Activated CD8-positive, alpha-beta memory T cell treated with anti-CD3 and anti-CD28 coated beads, Interleukin-2, amount 10 ng/mL, durations not matched to agents 7 days and 5 days (primary cell): ENCODE measurements at regions of chr2 and their contacts with region 1.

Region 1: DNA sequence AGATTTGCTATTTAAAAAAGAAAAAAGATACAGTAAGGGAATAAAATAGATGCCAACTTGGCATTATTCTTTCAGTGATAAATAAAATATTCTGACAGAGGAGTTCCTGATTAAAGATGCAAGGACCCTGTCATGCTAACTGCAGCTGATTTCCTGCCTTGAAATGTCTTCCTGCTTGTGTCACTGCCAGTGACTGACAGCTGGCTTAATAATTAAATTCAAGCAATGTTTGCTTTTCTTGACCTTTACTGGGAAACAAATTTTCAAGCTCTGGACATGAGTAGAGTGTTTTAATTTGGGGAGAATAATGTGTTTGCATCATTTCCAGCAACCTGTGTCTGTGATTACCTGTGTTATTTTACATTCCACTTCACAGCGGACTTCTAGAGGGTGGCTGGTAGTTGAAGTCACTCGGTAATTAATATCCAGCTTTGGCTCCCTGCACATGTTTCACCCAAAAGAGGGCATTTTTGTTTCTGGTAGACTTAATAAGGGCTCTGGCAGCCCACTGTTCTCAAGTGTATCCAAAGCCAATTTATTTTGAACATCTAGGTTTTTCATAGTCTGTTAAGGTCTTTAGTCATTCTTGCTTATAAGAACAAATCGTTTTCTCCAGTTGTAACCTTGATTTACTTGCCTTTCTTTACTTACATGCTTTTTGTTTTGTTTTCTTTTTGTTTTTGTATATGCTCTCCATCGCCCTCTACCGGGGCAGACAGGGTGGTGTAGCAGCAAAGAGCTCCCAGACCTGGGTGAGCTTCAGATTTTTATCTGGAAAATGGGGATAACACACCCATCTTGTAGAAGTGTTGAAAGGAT is 48.5 kb upstream of the PROKR1 start:
- DNase-seq: peak; percentile 69
- ATAC-seq: peak; percentile 77
- H3K4me3 Mint-ChIP-seq: peak overlapping the region; percentile 27
- H3K27ac Mint-ChIP-seq: peak overlapping the region; percentile 50
- H3K4me1 Mint-ChIP-seq: peaks cover 11% of the 10 kb centered on the region
- H3K27me3 Mint-ChIP-seq: peaks cover 13% of the 10 kb centered on the region

Region 2: DNA sequence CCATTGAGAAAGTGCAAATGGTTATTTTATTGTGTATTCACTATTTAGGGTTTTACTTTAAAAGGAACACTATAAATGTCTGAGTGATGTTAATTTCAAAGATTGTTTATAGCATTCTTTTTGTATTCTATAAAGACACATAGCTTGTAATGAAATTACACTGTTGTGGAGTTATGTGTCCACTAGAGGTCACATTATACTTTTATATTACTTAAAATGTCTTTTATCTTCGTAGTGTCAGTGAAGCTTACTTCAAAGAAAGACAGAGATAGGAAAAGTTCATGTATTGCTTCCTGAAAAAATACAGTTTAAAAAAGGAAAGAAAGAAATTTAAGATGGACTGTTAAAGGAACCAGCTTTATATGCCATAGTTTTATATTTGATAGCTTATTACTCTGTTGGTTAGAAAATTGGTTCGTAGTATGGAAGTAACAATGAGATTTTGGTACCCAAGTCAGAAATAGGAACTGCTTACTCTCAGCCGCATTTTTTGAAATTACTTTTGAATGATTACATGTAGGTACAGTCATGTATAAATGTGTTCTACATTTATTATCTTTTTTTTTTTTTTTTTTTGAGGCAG is 107.0 kb before region 1 on chr2:
- CTCF ChIA-PET with region 1: interaction called, 19 read pairs
- DNase-seq: no peak
- ATAC-seq: no peak
- H3K4me3 Mint-ChIP-seq: no peak overlapping the region
- H3K27ac Mint-ChIP-seq: no peak overlapping the region
- H3K4me1 Mint-ChIP-seq: peaks cover 3% of the 10 kb centered on the region
- H3K27me3 Mint-ChIP-seq: no peaks in the 10 kb centered on the region

Region 3: DNA sequence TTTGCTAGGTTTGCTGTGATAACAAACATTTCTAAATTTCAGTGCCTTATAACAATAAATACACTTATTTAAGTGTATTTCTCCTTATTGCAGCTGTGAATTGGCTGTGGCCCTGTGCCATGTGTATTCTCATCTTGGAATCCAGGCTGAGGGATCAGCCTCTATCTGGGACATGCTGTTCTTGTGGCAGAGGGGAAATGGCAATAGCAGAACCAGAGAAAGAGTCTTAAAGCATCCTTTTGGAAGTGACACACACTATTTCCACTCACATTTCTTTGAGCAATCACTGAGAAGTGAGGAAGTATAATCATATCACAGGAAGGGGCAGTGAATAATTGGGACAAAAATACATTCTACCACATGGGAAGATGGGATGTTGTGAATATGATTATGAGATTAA is 17.7 kb before region 1 on chr2:
- CTCF ChIA-PET with region 1: interaction called, 19 read pairs
- DNase-seq: no peak
- ATAC-seq: no peak
- H3K4me3 Mint-ChIP-seq: no peak overlapping the region
- H3K27ac Mint-ChIP-seq: no peak overlapping the region
- H3K4me1 Mint-ChIP-seq: no peaks in the 10 kb centered on the region
- H3K27me3 Mint-ChIP-seq: no peaks in the 10 kb centered on the region

Region 4: GRCh38 chr2:68605939-68606338 is 11.1 kb after region 1 on chr2:
- CTCF ChIA-PET with region 1: interaction called, 18 read pairs
- DNase-seq: no peak
- ATAC-seq: no peak
- H3K4me3 Mint-ChIP-seq: no peak overlapping the region
- H3K27ac Mint-ChIP-seq: no peak overlapping the region
- H3K4me1 Mint-ChIP-seq: peaks cover 11% of the 10 kb centered on the region
- H3K27me3 Mint-ChIP-seq: no peaks in the 10 kb centered on the region

Region 5: GRCh38 chr2:68689553-68690537 is 95.0 kb after region 1 on chr2:
- CTCF ChIA-PET with region 1: no interaction called
- DNase-seq: no peak
- ATAC-seq: peak; percentile 57
- H3K4me3 Mint-ChIP-seq: no peak overlapping the region
- H3K27ac Mint-ChIP-seq: peak overlapping the region; percentile 44
- H3K4me1 Mint-ChIP-seq: peaks cover 20% of the 10 kb centered on the region
- H3K27me3 Mint-ChIP-seq: peaks cover 16% of the 10 kb centered on the region

Region 6: DNA sequence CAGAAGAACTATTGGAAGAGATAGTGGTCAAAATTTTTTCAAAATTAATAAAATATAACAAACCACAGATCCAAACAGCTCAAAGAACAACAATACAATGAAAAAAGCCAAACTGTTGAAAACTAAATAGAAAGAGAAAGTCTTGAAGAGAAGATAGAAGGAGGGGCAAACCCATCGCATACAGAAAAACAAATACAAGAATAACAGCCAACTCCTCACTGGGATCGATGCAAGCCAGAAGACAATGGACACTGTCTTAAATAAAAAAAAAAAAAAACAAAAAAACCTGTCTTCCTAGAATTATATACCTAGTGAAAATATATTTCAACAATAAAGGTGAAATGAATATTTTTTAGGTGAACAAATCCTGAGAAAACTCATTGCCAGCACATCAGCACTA is 105.7 kb after region 1 on chr2:
- CTCF ChIA-PET with region 1: no interaction called
- DNase-seq: no peak
- ATAC-seq: no peak
- H3K4me3 Mint-ChIP-seq: no peak overlapping the region
- H3K27ac Mint-ChIP-seq: no peak overlapping the region
- H3K4me1 Mint-ChIP-seq: no peaks in the 10 kb centered on the region
- H3K27me3 Mint-ChIP-seq: peaks cover 9% of the 10 kb centered on the region